ENCODE measurements at regions of chr5 and their contacts with region 1.

Region 1: DNA sequence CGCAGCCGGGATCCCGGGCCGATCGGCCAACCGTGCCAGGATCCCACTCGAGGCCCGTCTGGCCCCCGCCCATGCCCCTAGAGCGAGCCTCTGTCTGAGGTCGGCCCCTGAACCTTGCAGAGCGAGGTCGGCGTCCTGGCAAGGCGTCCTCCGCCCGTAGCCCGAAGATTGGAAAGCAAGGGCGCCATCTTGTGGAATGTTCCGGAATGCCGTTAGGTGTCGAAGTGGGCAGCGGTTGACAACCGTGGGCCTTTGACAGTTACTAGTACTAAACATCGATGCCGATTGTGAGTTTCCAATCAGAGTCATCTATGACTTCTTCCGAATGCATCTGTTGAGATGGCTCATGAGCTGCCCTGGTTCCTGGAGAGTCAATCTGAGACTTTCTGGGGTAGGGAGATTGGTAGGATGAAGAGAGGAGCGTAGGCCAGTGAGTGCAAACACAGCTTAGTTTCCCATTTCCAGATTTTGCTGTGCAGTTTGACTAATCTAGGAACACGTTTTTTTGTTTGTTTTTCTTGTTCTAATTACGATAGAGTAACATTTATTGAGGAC is 923 bp upstream of the PLK2 start:
- DNase-seq: peak; percentile 91
- H3K4me3 ChIP-seq: peak overlapping the region; percentile 34 to 94 (median 92)
- H3K27ac ChIP-seq: peak overlapping the region; percentile 87
- H3K4me1 ChIP-seq: peaks cover 25% of the 10 kb centered on the region
- H3K27me3 ChIP-seq: no peaks in the 10 kb centered on the region
- CTCF ChIP-seq: peak; percentile 72 to 82
- POLR2A ChIP-seq: no peak

Region 2: DNA sequence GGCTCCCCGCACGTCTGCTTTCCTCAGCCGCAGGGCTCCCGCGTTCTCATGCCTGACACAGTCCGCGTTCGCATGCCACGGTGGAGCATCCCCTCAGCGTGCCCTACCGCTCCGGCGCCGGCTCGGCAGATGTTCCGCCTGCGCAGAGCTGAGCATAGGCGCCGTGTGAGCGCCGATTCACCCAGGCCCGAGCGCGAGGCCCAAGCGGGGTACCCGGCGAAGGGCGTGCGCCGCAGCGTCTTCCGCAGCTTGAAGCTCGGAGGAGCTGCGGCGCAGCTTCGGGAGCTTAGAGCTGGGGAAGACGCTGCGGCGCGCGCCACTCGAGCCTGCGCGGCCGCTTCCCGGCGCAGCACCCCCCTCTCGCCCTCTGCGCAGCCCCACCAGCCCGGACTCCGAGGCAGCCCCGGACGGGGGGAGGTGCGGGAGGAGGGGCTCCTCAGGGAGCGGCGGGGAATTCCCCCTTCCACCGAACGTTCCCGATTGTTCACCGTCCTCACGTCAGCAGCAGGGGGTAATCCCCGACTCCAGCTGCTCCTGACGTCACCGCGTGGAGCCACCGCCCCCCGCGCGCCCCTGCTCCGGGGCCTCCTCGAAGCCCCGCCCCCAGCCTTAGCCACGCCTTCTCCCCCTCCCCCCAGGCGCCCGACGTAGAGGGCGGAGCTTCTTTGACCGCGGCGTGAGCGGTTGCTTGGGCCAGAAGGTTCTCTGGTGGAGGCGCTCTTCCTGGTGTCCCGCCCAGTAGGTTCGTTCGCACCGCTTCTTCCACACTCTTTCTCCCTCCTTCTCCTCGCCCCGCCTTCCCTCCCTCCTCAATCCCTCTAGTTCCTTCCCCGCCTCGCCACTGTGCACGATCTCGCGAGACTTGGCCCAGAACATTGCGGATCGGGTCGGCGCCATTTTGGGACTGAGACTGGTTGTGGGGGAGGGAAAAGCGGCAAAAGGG is 1287.4 kb before region 1 on chr5 and contains the start of gene GPBP1:
- CTCF ChIA-PET with region 1: no interaction called
- POLR2A ChIA-PET with region 1: no interaction called
- dilution Hi-C with region 1: no loop called
- intact Hi-C with region 1: loop called (anchors 5 kb)
- DNase-seq: peak; percentile 99
- H3K4me3 ChIP-seq: peak within 1 kb of the TSS; percentile 77 to 96 (median 86)
- H3K27ac ChIP-seq: peak within 1 kb of the TSS; percentile 94
- H3K4me1 ChIP-seq: peaks cover 32% of the 10 kb centered on the region
- H3K27me3 ChIP-seq: no peaks in the 10 kb centered on the region
- CTCF ChIP-seq: peak in 1 of 2 donors; percentile 1
- POLR2A ChIP-seq: no peak
- total RNA-seq, gene GPBP1: 48.2 and 57.4 TPM in 2 replicates

Region 3: GRCh38 chr5:57435701-57436134 is 1025.1 kb before region 1 on chr5:
- CTCF ChIA-PET with region 1: interaction called, 8 read pairs
- POLR2A ChIA-PET with region 1: interaction called, 7 read pairs
- dilution Hi-C with region 1: no loop called
- intact Hi-C with region 1: loop called (anchors 1 kb)
- DNase-seq: peak; percentile 99
- H3K4me3 ChIP-seq: no peak overlapping the region
- H3K27ac ChIP-seq: peak overlapping the region; percentile 98
- H3K4me1 ChIP-seq: peaks cover 71% of the 10 kb centered on the region
- H3K27me3 ChIP-seq: no peaks in the 10 kb centered on the region
- CTCF ChIP-seq: no peak
- POLR2A ChIP-seq: peak; percentile 37

Region 4: GRCh38 chr5:57650360-57651069 is 810.3 kb before region 1 on chr5:
- CTCF ChIA-PET with region 1: interaction called, 29 read pairs
- POLR2A ChIA-PET with region 1: interaction called, 3 read pairs
- dilution Hi-C with region 1: no loop called
- intact Hi-C with region 1: loop called (anchors 1 kb)
- DNase-seq: peak; percentile 61
- H3K4me3 ChIP-seq: no peak overlapping the region
- H3K27ac ChIP-seq: no peak overlapping the region
- H3K4me1 ChIP-seq: peaks cover 5% of the 10 kb centered on the region
- H3K27me3 ChIP-seq: no peaks in the 10 kb centered on the region
- CTCF ChIP-seq: peak; percentile 62 to 83
- POLR2A ChIP-seq: no peak

Region 5: GRCh38 chr5:57887851-57888621 is 572.8 kb before region 1 on chr5:
- CTCF ChIA-PET with region 1: interaction called, 72 read pairs
- POLR2A ChIA-PET with region 1: interaction called, 12 read pairs
- dilution Hi-C with region 1: no loop called
- intact Hi-C with region 1: loop called (anchors 1 kb)
- DNase-seq: peak; percentile 73
- H3K4me3 ChIP-seq: no peak overlapping the region
- H3K27ac ChIP-seq: no peak overlapping the region
- H3K4me1 ChIP-seq: no peaks in the 10 kb centered on the region
- H3K27me3 ChIP-seq: no peaks in the 10 kb centered on the region
- CTCF ChIP-seq: peak; percentile 53 to 66
- POLR2A ChIP-seq: no peak

Region 6: GRCh38 chr5:58188262-58188651 is 272.6 kb before region 1 on chr5:
- CTCF ChIA-PET with region 1: interaction called, 7 read pairs
- POLR2A ChIA-PET with region 1: no interaction called
- dilution Hi-C with region 1: no loop called
- intact Hi-C with region 1: loop called (anchors 1 kb)
- DNase-seq: peak; percentile 75
- H3K4me3 ChIP-seq: no peak overlapping the region
- H3K27ac ChIP-seq: peak overlapping the region; percentile 39
- H3K4me1 ChIP-seq: peaks cover 18% of the 10 kb centered on the region
- H3K27me3 ChIP-seq: no peaks in the 10 kb centered on the region
- CTCF ChIP-seq: no peak
- POLR2A ChIP-seq: no peak

Region 7: GRCh38 chr5:58273711-58274110 is 187.1 kb before region 1 on chr5:
- CTCF ChIA-PET with region 1: interaction called, 5 read pairs
- POLR2A ChIA-PET with region 1: interaction called, 6 read pairs
- dilution Hi-C with region 1: no loop called
- intact Hi-C with region 1: loop called (anchors 2 kb)
- DNase-seq: no peak
- H3K4me3 ChIP-seq: no peak overlapping the region
- H3K27ac ChIP-seq: peak overlapping the region; percentile 42
- H3K4me1 ChIP-seq: peaks cover 12% of the 10 kb centered on the region
- H3K27me3 ChIP-seq: no peaks in the 10 kb centered on the region
- CTCF ChIP-seq: no peak
- POLR2A ChIP-seq: no peak

Region 8: GRCh38 chr5:58327289-58327688 is 133.5 kb before region 1 on chr5:
- CTCF ChIA-PET with region 1: no interaction called
- POLR2A ChIA-PET with region 1: no interaction called
- dilution Hi-C with region 1: no loop called
- intact Hi-C with region 1: no loop called
- DNase-seq: no peak
- H3K4me3 ChIP-seq: no peak overlapping the region
- H3K27ac ChIP-seq: no peak overlapping the region
- H3K4me1 ChIP-seq: peaks cover 8% of the 10 kb centered on the region
- H3K27me3 ChIP-seq: no peaks in the 10 kb centered on the region
- CTCF ChIP-seq: no peak
- POLR2A ChIP-seq: no peak

Region 9: DNA sequence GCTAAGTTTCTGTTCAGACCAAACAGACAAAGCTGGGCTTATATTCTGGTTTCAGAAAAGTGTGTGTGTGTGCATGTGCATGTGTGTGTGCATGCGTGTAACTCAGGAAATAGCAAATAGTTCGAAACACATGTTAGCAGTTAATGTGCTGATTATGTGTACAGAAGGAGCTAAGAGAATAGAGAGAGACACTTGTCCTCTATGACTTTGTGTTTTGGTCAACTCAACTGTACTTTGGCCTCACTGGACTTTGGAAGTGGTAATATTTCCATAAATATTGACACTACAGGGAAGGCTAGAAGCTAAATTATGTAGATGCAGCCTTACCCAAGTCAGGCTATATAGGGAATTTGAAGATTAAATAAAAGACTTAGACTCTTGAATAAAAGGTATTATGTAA is 277.5 kb after region 1 on chr5:
- CTCF ChIA-PET with region 1: no interaction called
- POLR2A ChIA-PET with region 1: no interaction called
- dilution Hi-C with region 1: no loop called
- intact Hi-C with region 1: no loop called
- DNase-seq: no peak
- H3K4me3 ChIP-seq: no peak overlapping the region
- H3K27ac ChIP-seq: no peak overlapping the region
- H3K4me1 ChIP-seq: no peaks in the 10 kb centered on the region
- H3K27me3 ChIP-seq: no peaks in the 10 kb centered on the region
- CTCF ChIP-seq: no peak
- POLR2A ChIP-seq: no peak